ENCODE measurements at regions of chr12 and their contacts with region 1.

Region 1: DNA sequence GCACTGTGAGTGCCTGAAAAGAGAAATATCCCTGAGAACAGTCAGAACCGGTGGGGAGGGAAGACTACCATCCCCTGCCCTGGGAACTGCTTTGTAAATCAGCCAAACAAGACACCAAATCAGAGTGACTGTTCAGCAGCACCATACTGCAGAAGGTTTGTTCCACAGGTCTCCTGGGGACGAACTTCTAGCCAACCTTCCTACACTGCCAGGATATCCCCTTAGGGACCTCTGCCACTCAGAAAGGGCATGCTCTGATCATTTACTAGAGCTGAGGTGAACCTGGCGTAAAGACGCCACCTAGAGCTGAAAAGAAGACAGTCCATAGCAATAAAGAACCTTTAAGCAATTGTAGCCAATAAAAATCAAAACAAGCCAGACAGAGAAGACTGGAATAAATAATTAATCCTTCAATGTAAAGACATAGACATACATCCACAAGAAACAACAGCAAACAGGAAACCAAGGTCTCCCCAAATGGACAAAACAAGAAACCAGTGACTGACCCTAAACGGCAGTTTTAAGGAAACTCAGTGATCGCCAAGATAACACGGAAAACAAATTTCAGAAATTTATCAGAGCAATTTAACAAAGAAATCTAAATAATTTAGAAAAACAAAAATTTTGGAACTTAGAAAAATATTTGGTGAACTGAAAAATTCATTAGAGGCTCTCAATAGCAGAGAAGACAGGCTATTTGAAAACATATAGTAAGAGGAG is 228.1 kb upstream of the AMIGO2 start:
- DNase-seq: peak; percentile 74
- ATAC-seq: peak; percentile 99
- H3K4me3 Mint-ChIP-seq: peak overlapping the region; percentile 62
- H3K27ac Mint-ChIP-seq: peak overlapping the region; percentile 74
- H3K4me1 Mint-ChIP-seq: peaks cover 33% of the 10 kb centered on the region
- H3K27me3 Mint-ChIP-seq: no peaks in the 10 kb centered on the region

Region 2: GRCh38 chr12:47071241-47071852 is 236.5 kb before region 1 on chr12:
- CTCF ChIA-PET with region 1: interaction called, 21 read pairs
- DNase-seq: no peak
- ATAC-seq: peak; percentile 33
- H3K4me3 Mint-ChIP-seq: no peak overlapping the region
- H3K27ac Mint-ChIP-seq: no peak overlapping the region
- H3K4me1 Mint-ChIP-seq: peaks cover 11% of the 10 kb centered on the region
- H3K27me3 Mint-ChIP-seq: no peaks in the 10 kb centered on the region